ENCODE measurements at regions of chr9 and their contacts with region 1.

Region 1: GRCh38 chr9:136138566-136138965 is 19.9 kb upstream of the TMEM250 start:
- DNase-seq: no peak
- H3K4me3 ChIP-seq: no peak overlapping the region
- H3K27ac ChIP-seq: no peak overlapping the region
- H3K4me1 ChIP-seq: no peaks in the 10 kb centered on the region
- H3K27me3 ChIP-seq: no peaks in the 10 kb centered on the region
- CTCF ChIP-seq: no peak
- POLR2A ChIP-seq: no peak

Region 2: DNA sequence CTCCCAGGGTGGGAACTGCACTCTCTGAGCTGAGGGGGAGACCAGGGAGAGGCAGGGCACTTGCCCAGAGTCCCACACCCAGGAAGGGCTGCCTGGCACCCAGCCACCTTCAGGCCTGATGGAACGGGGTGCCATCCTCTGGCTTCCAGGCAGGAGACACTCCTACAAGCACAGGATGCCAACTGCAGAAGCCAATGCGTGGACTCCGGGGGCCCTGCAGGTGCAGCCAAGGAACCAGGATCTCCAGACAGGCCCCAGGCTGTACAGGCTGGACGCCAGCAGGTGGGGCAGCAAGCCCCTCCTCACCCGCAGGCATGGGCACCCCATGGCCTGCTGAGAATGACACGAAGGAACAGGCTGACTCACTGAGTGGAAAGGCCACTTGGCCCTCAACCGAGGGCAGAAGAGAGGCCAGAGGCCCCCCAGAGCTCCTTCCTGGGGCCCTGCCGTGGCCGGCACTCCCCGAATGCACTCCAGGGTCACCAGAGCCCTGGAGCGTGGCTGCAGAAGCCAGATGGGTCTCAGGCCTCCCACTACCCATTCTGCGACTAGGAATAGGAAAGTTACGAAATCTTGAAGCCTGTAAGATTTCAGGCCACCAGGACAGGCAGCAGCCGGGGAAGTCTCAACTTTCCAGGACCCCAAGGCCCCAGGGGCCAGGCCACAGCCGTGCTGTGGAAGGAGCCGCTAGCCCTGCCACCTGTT is 59.2 kb before region 1 on chr9:
- intact Hi-C with region 1: no loop called
- DNase-seq: no peak
- H3K4me3 ChIP-seq: no peak overlapping the region
- H3K27ac ChIP-seq: peak overlapping the region; percentile 11
- H3K4me1 ChIP-seq: peaks cover 11% of the 10 kb centered on the region
- H3K27me3 ChIP-seq: no peaks in the 10 kb centered on the region
- CTCF ChIP-seq: no peak
- POLR2A ChIP-seq: no peak

Region 3: GRCh38 chr9:136283291-136284235 is 145.0 kb after region 1 on chr9:
- intact Hi-C with region 1: loop called (anchors 5 kb)
- DNase-seq: peak; percentile 67
- H3K4me3 ChIP-seq: no peak overlapping the region
- H3K27ac ChIP-seq: no peak overlapping the region
- H3K4me1 ChIP-seq: no peaks in the 10 kb centered on the region
- H3K27me3 ChIP-seq: peaks cover 2% of the 10 kb centered on the region
- CTCF ChIP-seq: peak; percentile 55 to 86 (median 70)
- POLR2A ChIP-seq: no peak

Measured in prostate gland (tissue), 2 donors.